IMR-90 (cell line): ENCODE measurements at regions of chr11 and their contacts with region 1.

Region 1: DNA sequence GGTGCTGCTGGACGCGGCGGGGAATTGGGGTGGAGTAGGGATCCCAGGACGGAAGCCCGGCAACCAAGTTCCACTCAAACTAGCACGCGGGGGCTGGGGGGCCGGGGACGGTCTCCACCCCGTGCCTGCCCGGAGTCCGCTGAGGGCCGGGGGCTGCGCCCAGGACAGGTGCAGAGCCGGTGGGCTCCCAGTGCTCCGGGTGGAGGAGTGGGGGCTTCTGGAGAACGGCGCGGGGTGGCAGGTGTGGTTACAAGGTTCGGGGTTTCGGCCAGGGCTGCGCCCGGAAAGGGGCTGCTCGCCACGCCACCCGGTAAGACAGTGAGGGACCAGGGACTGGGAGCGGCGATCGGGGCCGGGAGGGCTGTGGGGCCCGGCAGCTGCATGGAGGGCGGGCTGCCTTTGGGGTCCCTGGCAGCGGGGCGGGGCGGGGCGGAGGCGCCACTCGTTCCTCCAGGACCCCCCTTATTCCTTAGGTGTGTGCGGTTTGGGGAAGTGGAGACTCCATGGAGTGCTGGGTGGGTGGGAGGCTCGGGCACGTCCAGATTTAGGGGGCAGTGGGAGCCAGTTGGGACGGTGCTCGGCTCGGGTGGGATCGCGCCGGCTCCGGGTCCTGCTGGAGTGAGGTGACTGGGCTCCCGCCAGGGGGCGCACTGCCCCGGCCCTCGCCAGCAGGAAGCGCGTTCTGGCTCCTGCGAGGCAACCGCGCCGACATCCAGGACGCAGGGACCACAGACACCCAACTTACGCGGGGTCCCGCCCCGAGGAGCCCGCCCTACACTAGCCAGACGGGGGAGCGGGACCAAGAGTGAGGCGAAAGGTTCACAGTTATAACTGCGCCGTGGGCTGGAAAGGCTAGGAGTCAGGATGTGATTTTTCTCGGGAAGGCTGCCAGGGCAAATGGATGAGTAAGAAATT is 868 bp downstream of the TSPAN18 start:
- DNase-seq: peak; percentile 65
- ATAC-seq: peak; percentile 89
- H3K4me3 ChIP-seq: peak overlapping the region; percentile 45
- H3K27ac ChIP-seq: no peak overlapping the region
- H3K4me1 ChIP-seq: no peaks in the 10 kb centered on the region; the same call in 1 of the 2 replicates
- H3K27me3 ChIP-seq: peaks cover 51% of the 10 kb centered on the region
- CTCF ChIP-seq: peak; percentile 87
- POLR2A ChIP-seq: no peak
- RAD21 ChIP-seq: peak; percentile 87

Region 2: GRCh38 chr11:44434191-44434590 is 293.4 kb before region 1 on chr11:
- CTCF ChIA-PET with region 1: no interaction called
- POLR2A ChIA-PET with region 1: no interaction called
- dilution Hi-C with region 1: no loop called
- in situ Hi-C with region 1: no loop called
- intact Hi-C with region 1: no loop called
- DNase-seq: no peak
- ATAC-seq: no peak
- H3K4me3 ChIP-seq: no peak overlapping the region
- H3K27ac ChIP-seq: no peak overlapping the region
- H3K4me1 ChIP-seq: no peaks in the 10 kb centered on the region
- H3K27me3 ChIP-seq: peaks cover 8% of the 10 kb centered on the region
- CTCF ChIP-seq: no peak
- POLR2A ChIP-seq: no peak
- RAD21 ChIP-seq: no peak

Region 3: GRCh38 chr11:44565211-44565952 is 162.2 kb before region 1 on chr11 and contains the start of gene CD82:
- CTCF ChIA-PET with region 1: no interaction called
- POLR2A ChIA-PET with region 1: no interaction called
- dilution Hi-C with region 1: no loop called
- in situ Hi-C with region 1: no loop called
- intact Hi-C with region 1: loop called (anchors 10 kb)
- DNase-seq: peak; percentile 97
- ATAC-seq: peak; percentile 92
- H3K4me3 ChIP-seq: peak within 1 kb of the TSS; percentile 78
- H3K27ac ChIP-seq: peak within 1 kb of the TSS; percentile 93
- H3K4me1 ChIP-seq: peaks cover 45% of the 10 kb centered on the region
- H3K27me3 ChIP-seq: no peaks in the 10 kb centered on the region
- CTCF ChIP-seq: peak; percentile 40
- POLR2A ChIP-seq: peak; percentile 90
- RAD21 ChIP-seq: peak; percentile 47
- total RNA-seq, gene CD82: 18.9 and 32.8 TPM in 2 replicates

Region 4: GRCh38 chr11:44634401-44635281 is 93.0 kb before region 1 on chr11:
- CTCF ChIA-PET with region 1: no interaction called
- POLR2A ChIA-PET with region 1: no interaction called
- dilution Hi-C with region 1: no loop called
- in situ Hi-C with region 1: no loop called
- intact Hi-C with region 1: loop called (anchors 5 kb)
- DNase-seq: peak; percentile 79
- ATAC-seq: peak; percentile 79
- H3K4me3 ChIP-seq: no peak overlapping the region
- H3K27ac ChIP-seq: no peak overlapping the region
- H3K4me1 ChIP-seq: peaks cover 7% of the 10 kb centered on the region
- H3K27me3 ChIP-seq: peaks cover 6% of the 10 kb centered on the region
- CTCF ChIP-seq: no peak
- POLR2A ChIP-seq: no peak
- RAD21 ChIP-seq: no peak

Region 5: GRCh38 chr11:44804449-44805437 is 77.1 kb after region 1 on chr11:
- CTCF ChIA-PET with region 1: no interaction called
- POLR2A ChIA-PET with region 1: no interaction called
- dilution Hi-C with region 1: no loop called
- in situ Hi-C with region 1: no loop called
- intact Hi-C with region 1: loop called (anchors 5 kb)
- DNase-seq: peak; percentile 20
- ATAC-seq: peak; percentile 80
- H3K4me3 ChIP-seq: no peak overlapping the region
- H3K27ac ChIP-seq: peak overlapping the region; percentile 27; the same call in 1 of the 2 replicates
- H3K4me1 ChIP-seq: peaks cover 12% of the 10 kb centered on the region; the same call in 1 of the 2 replicates
- H3K27me3 ChIP-seq: peaks cover 45% of the 10 kb centered on the region
- CTCF ChIP-seq: no peak
- POLR2A ChIP-seq: no peak
- RAD21 ChIP-seq: no peak

Region 6: DNA sequence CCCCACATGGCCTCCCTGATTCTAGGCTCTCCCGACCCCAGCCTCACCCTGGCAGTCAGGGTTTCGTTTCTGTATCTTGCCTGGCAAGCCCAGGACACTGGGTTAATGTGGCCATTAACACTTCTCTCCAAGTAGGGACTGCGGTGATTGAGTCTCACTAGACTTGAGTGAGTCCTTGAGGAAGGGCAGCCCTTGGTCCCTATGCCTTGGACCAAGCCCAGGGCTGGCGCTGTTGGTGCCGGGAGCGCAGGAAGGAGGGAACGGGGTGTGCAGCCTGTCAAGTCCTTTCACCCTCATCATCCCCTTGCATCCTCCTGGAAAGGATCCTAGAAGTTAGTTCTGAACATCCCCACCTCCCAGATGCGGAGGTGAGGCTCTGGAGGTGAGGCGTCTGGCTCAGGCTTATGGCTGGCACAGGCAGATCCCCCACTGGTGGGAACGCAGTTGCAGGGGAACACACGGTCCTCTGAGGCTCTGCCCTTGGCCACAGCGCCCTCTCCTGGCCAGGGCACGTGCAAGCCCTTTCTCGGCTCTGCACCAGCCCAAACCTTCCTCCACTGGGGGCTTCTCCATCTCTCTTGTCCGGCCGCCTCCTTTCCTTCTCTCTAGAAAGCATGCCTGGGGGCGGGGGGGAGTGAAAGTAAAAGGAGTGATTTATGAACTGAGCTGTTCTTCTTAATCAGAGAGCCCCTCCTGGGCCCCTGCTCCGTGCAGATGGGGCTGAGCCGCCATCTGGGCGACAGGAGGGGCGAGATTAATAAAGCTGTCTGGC is 166.4 kb after region 1 on chr11:
- CTCF ChIA-PET with region 1: no interaction called
- POLR2A ChIA-PET with region 1: no interaction called
- dilution Hi-C with region 1: no loop called
- in situ Hi-C with region 1: loop called (anchors 5 kb)
- intact Hi-C with region 1: loop called (anchors 1 kb)
- DNase-seq: peak; percentile 66
- ATAC-seq: peak; percentile 97
- H3K4me3 ChIP-seq: no peak overlapping the region
- H3K27ac ChIP-seq: no peak overlapping the region
- H3K4me1 ChIP-seq: peaks cover 2% of the 10 kb centered on the region; the same call in 1 of the 2 replicates
- H3K27me3 ChIP-seq: peaks cover 17% of the 10 kb centered on the region
- CTCF ChIP-seq: peak; percentile 99
- POLR2A ChIP-seq: peak; percentile 66
- RAD21 ChIP-seq: peak; percentile 100

Region 7: GRCh38 chr11:44923806-44924205 is 196.2 kb after region 1 on chr11:
- CTCF ChIA-PET with region 1: no interaction called
- POLR2A ChIA-PET with region 1: no interaction called
- dilution Hi-C with region 1: no loop called
- in situ Hi-C with region 1: no loop called
- intact Hi-C with region 1: no loop called
- DNase-seq: no peak
- ATAC-seq: no peak
- H3K4me3 ChIP-seq: no peak overlapping the region
- H3K27ac ChIP-seq: no peak overlapping the region
- H3K4me1 ChIP-seq: no peaks in the 10 kb centered on the region
- H3K27me3 ChIP-seq: peaks cover 24% of the 10 kb centered on the region
- CTCF ChIP-seq: no peak
- POLR2A ChIP-seq: no peak
- RAD21 ChIP-seq: no peak